ENCODE measurements at regions of chr18 and their contacts with region 1.

Region 1: GRCh38 chr18:29104671-29105070 is 927.7 kb upstream of the CDH2 start:
- DNase-seq: no peak
- ATAC-seq: no peak
- H3K4me3 ChIP-seq: no peak overlapping the region
- H3K4me3 Mint-ChIP-seq: no peak overlapping the region
- H3K27ac ChIP-seq: no peak overlapping the region
- H3K27ac Mint-ChIP-seq: no peak overlapping the region
- H3K4me1 ChIP-seq: no peaks in the 10 kb centered on the region
- H3K4me1 Mint-ChIP-seq: peaks cover 0 to 1% (median 0%) of the 10 kb centered on the region in 7 donors
- H3K27me3 ChIP-seq: no peaks in the 10 kb centered on the region
- H3K27me3 Mint-ChIP-seq: no peaks in the 10 kb centered on the region

Region 2: DNA sequence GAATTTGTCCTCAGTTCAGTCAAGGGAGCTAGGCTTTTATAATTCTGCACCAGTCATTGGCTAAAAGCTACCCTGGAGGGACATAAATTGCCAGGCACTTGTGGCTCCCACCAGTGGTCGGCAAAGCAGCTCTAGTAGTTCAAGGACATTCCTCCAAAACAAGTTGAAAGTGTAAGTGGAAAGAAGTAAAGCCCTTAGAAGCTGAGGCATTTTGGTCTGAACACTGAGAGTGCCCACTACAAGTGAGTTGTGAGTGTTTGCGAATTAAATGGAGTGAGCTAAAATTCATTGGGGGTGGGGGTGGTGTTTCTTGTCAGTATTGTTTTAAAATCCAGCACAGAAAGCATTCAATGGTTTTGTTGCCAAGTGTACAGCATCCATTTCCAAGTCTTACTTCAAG is 47.9 kb before region 1 on chr18:
- CTCF ChIA-PET with region 1: no interaction called
- POLR2A ChIA-PET with region 1: no interaction called
- intact Hi-C with region 1: loop called in 1 of 2 experiments (anchors 5 kb)
- DNase-seq: no peak
- ATAC-seq: no peak
- H3K4me3 ChIP-seq: no peak overlapping the region
- H3K4me3 Mint-ChIP-seq: no peak overlapping the region
- H3K27ac ChIP-seq: no peak overlapping the region
- H3K27ac Mint-ChIP-seq: no peak overlapping the region
- H3K4me1 ChIP-seq: no peaks in the 10 kb centered on the region
- H3K4me1 Mint-ChIP-seq: no peaks in the 10 kb centered on the region
- H3K27me3 ChIP-seq: no peaks in the 10 kb centered on the region
- H3K27me3 Mint-ChIP-seq: no peaks in the 10 kb centered on the region

Measured in naive thymus-derived CD4-positive, alpha-beta T cell (primary cell).